WTC11 (cell line): ENCODE measurements at regions of chr9 and their contacts with region 1.

Region 1: DNA sequence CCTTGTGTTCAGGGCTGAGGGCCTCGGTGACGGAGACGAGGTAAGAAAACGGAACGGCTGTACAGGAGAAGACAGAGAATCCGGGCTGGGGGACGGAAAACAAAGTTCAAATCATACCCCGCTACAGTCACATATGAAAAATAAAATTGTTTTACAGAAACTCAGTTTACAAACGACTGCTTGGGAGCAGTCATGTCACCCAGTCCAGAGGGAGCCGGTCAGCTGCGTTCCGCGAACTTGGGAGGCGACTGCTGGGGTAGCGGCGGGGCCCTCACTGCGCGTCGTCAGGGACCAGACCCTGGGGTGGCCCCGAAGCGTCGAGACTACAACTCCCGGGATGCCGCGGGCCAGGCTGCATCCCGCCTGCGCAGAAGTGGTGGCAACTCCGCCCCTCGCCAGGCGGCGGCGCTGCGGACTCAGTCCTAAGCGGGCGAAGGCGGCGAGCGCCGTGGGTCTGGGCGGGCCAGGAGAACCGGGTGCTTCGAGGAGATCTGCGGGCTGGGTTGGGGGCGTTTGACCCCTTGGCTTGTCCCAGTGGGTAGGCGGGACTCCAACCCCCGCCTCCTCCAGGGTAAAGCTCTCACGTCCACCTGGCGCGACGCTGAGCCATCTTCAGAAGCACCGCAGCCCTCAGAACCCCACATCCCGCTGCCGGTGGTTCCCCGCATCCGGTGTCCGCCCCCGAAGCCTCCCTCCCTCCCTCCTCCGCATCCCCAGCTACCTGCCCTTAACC is 4.0 kb downstream of the SIT1 start:
- DNase-seq: peak; percentile 96
- ATAC-seq: peak; percentile 89
- H3K4me3 Mint-ChIP-seq: peak overlapping the region; percentile 88
- H3K27ac Mint-ChIP-seq: peak overlapping the region; percentile 82
- H3K4me1 Mint-ChIP-seq: peaks cover 43% of the 10 kb centered on the region
- H3K27me3 Mint-ChIP-seq: peaks cover 13% of the 10 kb centered on the region
- CTCF ChIP-seq: peak; percentile 90

Region 2: DNA sequence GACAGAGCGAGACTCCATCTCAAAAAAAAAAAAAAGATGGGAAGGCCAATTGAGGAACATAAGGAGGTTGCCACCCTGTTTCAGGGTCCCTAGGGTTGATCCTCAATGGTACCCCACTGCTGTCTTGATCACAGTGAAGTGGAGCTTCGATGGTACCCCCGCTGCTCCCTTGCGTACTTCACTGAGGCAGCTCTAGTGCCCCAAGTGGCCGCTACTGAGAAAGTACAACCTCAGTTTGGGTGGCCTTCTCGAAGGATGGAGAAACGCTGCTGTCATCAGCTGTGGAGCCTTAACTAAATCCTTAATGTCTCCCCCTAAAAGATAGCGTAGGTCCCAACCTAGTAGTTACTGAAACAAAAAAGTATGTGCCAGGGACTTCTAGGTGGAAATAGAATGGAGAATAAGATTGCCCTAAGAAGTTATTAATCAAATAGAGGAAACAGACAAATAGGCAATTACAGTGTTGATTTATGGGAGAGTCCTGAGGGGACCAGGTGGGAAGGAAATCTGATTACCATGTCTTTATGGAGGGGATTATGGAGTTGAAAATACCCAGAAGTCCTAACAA is 35.4 kb before region 1 on chr9:
- CTCF ChIA-PET with region 1: interaction called, 42 read pairs
- POLR2A ChIA-PET with region 1: interaction called, 3 read pairs
- DNase-seq: peak; percentile 63
- ATAC-seq: peak; percentile 87
- H3K4me3 Mint-ChIP-seq: no peak overlapping the region
- H3K27ac Mint-ChIP-seq: no peak overlapping the region
- H3K4me1 Mint-ChIP-seq: peaks cover 9% of the 10 kb centered on the region
- H3K27me3 Mint-ChIP-seq: peaks cover 36% of the 10 kb centered on the region
- CTCF ChIP-seq: peak; percentile 52

Region 3: GRCh38 chr9:35628389-35628991 is 18.2 kb before region 1 on chr9:
- CTCF ChIA-PET with region 1: interaction called, 17 read pairs
- POLR2A ChIA-PET with region 1: interaction called, 3 read pairs
- DNase-seq: no peak
- ATAC-seq: no peak
- H3K4me3 Mint-ChIP-seq: no peak overlapping the region
- H3K27ac Mint-ChIP-seq: no peak overlapping the region
- H3K4me1 Mint-ChIP-seq: no peaks in the 10 kb centered on the region
- H3K27me3 Mint-ChIP-seq: peaks cover 4% of the 10 kb centered on the region
- CTCF ChIP-seq: no peak

Region 4: GRCh38 chr9:35664531-35665470 is 18.1 kb after region 1 on chr9 and contains the start of gene ARHGEF39:
- CTCF ChIA-PET with region 1: interaction called, 19 read pairs
- POLR2A ChIA-PET with region 1: interaction called, 4 read pairs
- DNase-seq: peak; percentile 91
- ATAC-seq: peak; percentile 97
- H3K4me3 Mint-ChIP-seq: peak within 1 kb of the TSS; percentile 81
- H3K27ac Mint-ChIP-seq: peak within 1 kb of the TSS; percentile 71; the same call in 1 of the 2 replicates
- H3K4me1 Mint-ChIP-seq: peaks cover 24% of the 10 kb centered on the region
- H3K27me3 Mint-ChIP-seq: no peaks in the 10 kb centered on the region; the same call in 1 of the 2 replicates
- CTCF ChIP-seq: no peak
- total RNA-seq, gene ARHGEF39: 23.8 to 26.6 TPM (median 26.5 TPM) in 3 replicates

Region 5: DNA sequence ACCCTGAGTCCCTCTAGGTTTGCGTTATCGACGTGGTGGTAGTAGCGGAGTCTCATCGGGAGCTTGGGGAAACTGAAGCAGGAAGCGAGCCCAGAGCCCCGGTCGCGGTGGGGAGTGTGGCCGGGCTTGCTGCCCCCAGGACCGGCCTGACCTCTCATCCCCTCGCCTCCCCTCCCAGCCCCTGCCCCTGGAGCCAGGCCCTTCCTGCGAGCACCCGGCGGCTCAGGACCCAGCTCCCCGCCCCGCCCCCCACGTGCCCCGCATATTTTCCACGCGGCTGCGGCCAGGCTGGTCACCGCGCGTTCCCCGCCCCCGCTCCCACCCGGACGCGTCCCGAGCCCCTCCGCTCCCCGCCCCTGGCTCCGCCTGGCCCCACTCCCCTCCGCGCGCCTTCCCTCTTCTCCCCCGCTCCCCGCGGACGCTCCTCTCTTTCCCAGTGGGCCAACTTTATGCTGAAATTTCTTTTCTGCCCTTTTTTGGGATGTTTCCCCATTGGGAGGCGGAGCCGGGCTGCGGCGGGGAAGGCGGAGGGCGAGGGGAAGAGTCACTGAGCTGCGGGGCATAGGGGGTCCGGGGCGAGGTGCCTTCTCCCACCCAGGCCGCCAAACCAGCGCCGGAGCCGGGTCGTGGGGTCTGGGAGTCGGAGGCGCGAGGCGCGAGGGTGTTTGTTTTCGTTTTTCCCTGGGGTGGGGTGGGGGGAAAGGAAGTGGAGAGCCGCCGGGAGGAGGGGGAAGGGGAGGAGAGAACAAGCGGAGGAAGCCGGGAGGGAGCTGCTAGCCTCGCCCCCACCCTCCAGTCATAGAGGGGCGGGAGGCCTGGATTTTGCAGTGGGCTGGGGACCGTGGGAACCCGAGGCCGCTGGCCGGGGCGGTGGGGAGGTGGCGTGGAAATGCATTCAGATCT is 44.0 kb after region 1 on chr9:
- CTCF ChIA-PET with region 1: interaction called, 11 read pairs
- POLR2A ChIA-PET with region 1: interaction called, 14 read pairs
- DNase-seq: peak; percentile 64
- ATAC-seq: peak; percentile 40
- H3K4me3 Mint-ChIP-seq: peak overlapping the region; percentile 91
- H3K27ac Mint-ChIP-seq: no peak overlapping the region
- H3K4me1 Mint-ChIP-seq: peaks cover 23% of the 10 kb centered on the region
- H3K27me3 Mint-ChIP-seq: no peaks in the 10 kb centered on the region
- CTCF ChIP-seq: no peak

Region 6: GRCh38 chr9:35719546-35719945 is 72.8 kb after region 1 on chr9:
- CTCF ChIA-PET with region 1: no interaction called
- POLR2A ChIA-PET with region 1: no interaction called
- DNase-seq: no peak
- ATAC-seq: no peak
- H3K4me3 Mint-ChIP-seq: no peak overlapping the region
- H3K27ac Mint-ChIP-seq: no peak overlapping the region
- H3K4me1 Mint-ChIP-seq: no peaks in the 10 kb centered on the region
- H3K27me3 Mint-ChIP-seq: no peaks in the 10 kb centered on the region
- CTCF ChIP-seq: no peak

Region 7: DNA sequence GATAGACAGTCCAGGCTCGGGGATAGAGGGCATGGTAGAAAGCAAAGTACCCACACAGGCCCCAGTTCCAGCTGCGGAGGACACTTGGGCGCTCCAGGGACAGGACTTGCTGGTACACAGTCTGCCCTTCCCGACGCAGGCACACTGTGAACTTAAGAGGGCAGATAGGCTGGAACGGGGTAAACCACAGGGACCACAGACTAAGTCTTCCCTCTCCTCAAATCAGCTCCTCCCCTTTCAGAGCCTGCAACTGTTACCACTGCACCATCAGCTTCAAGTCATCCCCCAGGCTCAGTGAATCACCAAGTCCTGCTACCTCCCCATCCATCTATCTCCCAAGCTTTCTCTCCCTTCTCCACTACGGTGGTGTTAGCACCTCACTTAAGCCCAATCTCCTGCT is 95.0 kb after region 1 on chr9:
- CTCF ChIA-PET with region 1: no interaction called
- POLR2A ChIA-PET with region 1: no interaction called
- DNase-seq: no peak
- ATAC-seq: no peak
- H3K4me3 Mint-ChIP-seq: no peak overlapping the region
- H3K27ac Mint-ChIP-seq: 0 out of 2 replicates have a peak overlapping the region, but pooled peaks have one; percentile 9
- H3K4me1 Mint-ChIP-seq: peaks cover 10% of the 10 kb centered on the region
- H3K27me3 Mint-ChIP-seq: no peaks in the 10 kb centered on the region
- CTCF ChIP-seq: no peak